PC-3 (cell line): ENCODE measurements at regions of chr10 and their contacts with region 1.

Region 1: DNA sequence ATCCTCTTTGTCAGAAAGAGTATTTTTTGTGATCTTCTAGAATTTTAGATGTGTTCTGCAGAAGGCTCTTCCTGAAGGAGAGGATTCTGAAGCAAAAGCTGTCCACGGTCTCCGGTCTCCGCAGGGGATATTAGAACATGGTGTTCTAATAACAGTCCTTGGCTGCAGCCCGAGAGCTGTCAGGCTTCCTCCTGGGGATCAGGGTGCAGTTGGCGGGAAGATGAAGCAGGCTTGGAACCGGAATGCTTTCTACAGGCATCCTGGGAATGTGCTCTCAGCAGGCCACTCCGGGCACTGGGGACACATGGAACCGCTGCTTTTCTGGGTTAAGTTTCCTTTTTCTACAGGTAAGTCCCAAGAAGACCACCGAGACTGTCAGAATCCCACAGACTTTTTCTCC is 118.6 kb upstream of the PARD3 start:
- DNase-seq: no peak
- ATAC-seq: no peak
- H3K4me3 ChIP-seq: no peak overlapping the region
- H3K27ac ChIP-seq: no peak overlapping the region
- H3K4me1 ChIP-seq: peaks cover 8% of the 10 kb centered on the region
- H3K27me3 ChIP-seq: no peaks in the 10 kb centered on the region
- CTCF ChIP-seq: no peak

Region 2: DNA sequence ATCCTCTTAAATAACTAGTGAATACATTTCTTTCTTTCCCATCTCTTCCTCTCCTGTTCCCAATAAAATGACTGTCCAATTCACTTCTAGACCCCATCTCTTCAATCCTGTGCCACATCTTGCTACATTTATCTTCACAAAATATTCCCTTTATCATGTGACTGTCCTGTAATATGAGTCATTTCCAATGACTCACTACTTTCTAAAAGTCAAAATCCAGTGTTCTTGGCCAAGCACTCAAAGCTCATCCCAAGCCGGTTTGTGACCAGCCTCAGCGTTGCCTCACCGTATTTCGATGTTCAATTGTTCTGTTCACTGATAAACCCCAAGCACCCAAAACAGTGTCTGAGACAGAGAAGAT is 223.3 kb before region 1 on chr10:
- CTCF ChIA-PET with region 1: no interaction called
- POLR2A ChIA-PET with region 1: interaction called, 19 read pairs
- intact Hi-C with region 1: no loop called
- DNase-seq: peak; percentile 100
- ATAC-seq: peak; percentile 83
- H3K4me3 ChIP-seq: peak overlapping the region; percentile 15; the same call in 1 of the 2 replicates
- H3K27ac ChIP-seq: peak overlapping the region; percentile 25
- H3K4me1 ChIP-seq: peaks cover 62% of the 10 kb centered on the region
- H3K27me3 ChIP-seq: no peaks in the 10 kb centered on the region
- CTCF ChIP-seq: no peak

Region 3: GRCh38 chr10:34853357-34853756 is 80.3 kb before region 1 on chr10:
- CTCF ChIA-PET with region 1: interaction called, 7 read pairs
- POLR2A ChIA-PET with region 1: interaction called, 15 read pairs
- intact Hi-C with region 1: no loop called
- DNase-seq: no peak
- ATAC-seq: no peak
- H3K4me3 ChIP-seq: no peak overlapping the region
- H3K27ac ChIP-seq: no peak overlapping the region
- H3K4me1 ChIP-seq: peaks cover 12% of the 10 kb centered on the region
- H3K27me3 ChIP-seq: no peaks in the 10 kb centered on the region
- CTCF ChIP-seq: no peak

Region 4: GRCh38 chr10:34906067-34906965 is 27.4 kb before region 1 on chr10:
- CTCF ChIA-PET with region 1: interaction called, 10 read pairs
- POLR2A ChIA-PET with region 1: no interaction called
- intact Hi-C with region 1: no loop called
- DNase-seq: no peak
- ATAC-seq: no peak
- H3K4me3 ChIP-seq: no peak overlapping the region
- H3K27ac ChIP-seq: no peak overlapping the region
- H3K4me1 ChIP-seq: peaks cover 4% of the 10 kb centered on the region; the same call in 1 of the 2 replicates
- H3K27me3 ChIP-seq: no peaks in the 10 kb centered on the region
- CTCF ChIP-seq: no peak

Region 5: DNA sequence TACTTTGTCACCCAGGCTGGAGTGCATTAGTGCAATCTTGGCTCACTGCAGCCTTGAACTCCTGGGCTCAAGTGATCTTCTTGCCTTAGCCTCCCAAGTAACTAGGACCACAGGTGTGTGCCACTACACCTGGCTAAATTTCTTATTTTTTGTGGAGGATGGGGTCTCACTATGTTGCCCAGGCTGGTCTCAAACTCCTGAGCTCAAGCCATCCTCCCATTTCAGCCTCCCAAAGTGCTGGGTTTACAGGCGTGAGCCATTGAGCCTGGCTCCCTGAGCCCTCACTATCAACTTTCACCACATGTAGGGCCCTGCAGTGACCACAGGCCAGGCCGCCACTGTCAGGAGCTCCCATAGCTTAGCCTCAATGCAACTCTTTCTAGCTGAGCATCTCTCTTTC is 46.3 kb after region 1 on chr10:
- CTCF ChIA-PET with region 1: interaction called, 10 read pairs
- POLR2A ChIA-PET with region 1: no interaction called
- intact Hi-C with region 1: no loop called
- DNase-seq: no peak
- ATAC-seq: no peak
- H3K4me3 ChIP-seq: no peak overlapping the region
- H3K27ac ChIP-seq: no peak overlapping the region
- H3K4me1 ChIP-seq: peaks cover 10% of the 10 kb centered on the region
- H3K27me3 ChIP-seq: no peaks in the 10 kb centered on the region
- CTCF ChIP-seq: no peak